ENCODE measurements at regions of chr12 and their contacts with region 1.

Region 1: DNA sequence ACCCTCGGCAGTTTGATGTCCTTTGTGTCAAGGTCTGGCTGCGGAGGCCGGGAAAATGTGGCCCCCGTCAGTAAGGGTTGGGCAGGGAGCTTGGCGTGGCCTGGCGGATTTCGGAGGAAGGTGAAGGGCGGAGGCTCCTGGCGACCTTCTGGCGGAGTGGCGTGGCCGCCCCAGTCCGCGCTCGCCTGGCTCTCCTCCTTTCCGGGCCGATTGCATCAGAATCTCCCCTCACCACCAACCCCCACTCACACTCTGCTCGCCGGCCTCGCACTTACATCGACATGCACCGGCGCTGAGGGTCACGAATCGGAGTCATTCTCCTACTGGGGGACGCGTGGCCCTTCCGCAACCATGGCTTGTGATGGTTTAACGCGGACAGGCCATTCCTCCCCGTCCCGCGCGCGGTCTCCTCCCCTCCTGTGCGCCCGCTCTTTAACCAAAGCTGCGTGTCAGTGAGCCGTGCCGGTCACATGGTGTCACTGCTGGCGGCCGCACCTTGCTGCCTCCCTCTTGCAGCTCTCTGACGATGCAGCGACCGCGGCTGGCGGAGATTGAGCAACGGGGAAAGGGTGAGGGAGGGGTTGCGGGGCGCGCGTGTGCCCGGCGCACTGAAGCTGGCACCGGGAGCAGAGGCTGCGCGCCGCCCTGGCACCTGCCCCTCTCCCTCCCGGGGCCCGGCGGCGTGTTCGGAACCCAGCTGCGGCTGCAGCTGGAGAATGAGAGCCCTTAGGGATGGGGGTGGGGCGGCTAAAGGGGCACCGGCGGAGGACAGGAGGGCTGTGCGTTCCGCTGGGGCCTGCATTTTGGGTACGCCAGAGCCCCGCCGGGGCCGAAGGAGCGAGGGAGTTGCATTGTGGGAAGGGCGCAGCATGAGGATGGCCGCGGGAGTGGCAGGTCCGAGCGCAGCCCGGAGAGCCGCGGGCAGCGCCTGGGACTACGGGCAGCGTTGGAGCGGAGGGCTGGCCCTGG is at the start of gene SLC38A1:
- DNase-seq: peak; percentile 95
- H3K4me3 ChIP-seq: peak within 1 kb of the TSS; percentile 59 to 86 (median 68)
- H3K27ac ChIP-seq: peak within 1 kb of the TSS; percentile 91 to 94 (median 93)
- H3K4me1 ChIP-seq: peaks cover 19 to 58% (median 43%) of the 10 kb centered on the region in 4 donors
- H3K27me3 ChIP-seq: no peaks in the 10 kb centered on the region
- CTCF ChIP-seq: no peak
- EP300 ChIP-seq: no peak
- POLR2A ChIP-seq: peak; percentile 87
- total RNA-seq, gene SLC38A1: 173 to 200 (median 193) TPM

Region 2: GRCh38 chr12:45990468-45991283 is 278.2 kb before region 1 on chr12 and contains the start of gene SCAF11:
- intact Hi-C with region 1: no loop called
- DNase-seq: peak; percentile 100
- H3K4me3 ChIP-seq: peak within 1 kb of the TSS; percentile 76 to 90 (median 86)
- H3K27ac ChIP-seq: peak within 1 kb of the TSS; percentile 95 to 99 (median 97)
- H3K4me1 ChIP-seq: peaks cover 32 to 43% (median 38%) of the 10 kb centered on the region in 4 donors
- H3K27me3 ChIP-seq: no peaks in the 10 kb centered on the region
- CTCF ChIP-seq: peak in 2 of 3 experiments; percentile 98
- EP300 ChIP-seq: peak; percentile 28
- POLR2A ChIP-seq: peak; percentile 95
- total RNA-seq, gene SCAF11: 117 to 150 (median 132) TPM

Region 3: GRCh38 chr12:46153268-46153872 is 115.5 kb before region 1 on chr12:
- intact Hi-C with region 1: loop called (anchors 2 kb)
- DNase-seq: no peak
- H3K4me3 ChIP-seq: no peak overlapping the region
- H3K27ac ChIP-seq: peak overlapping the region in 2 of 4 donors; percentile 18 to 42
- H3K4me1 ChIP-seq: peaks cover 6 to 47% (median 43%) of the 10 kb centered on the region in 4 donors
- H3K27me3 ChIP-seq: no peaks in the 10 kb centered on the region
- CTCF ChIP-seq: peak; percentile 52 to 72 (median 71)
- EP300 ChIP-seq: no peak
- POLR2A ChIP-seq: no peak

Region 4: GRCh38 chr12:46209914-46210872 is 58.7 kb before region 1 on chr12:
- intact Hi-C with region 1: loop called (anchors 5 kb)
- DNase-seq: no peak
- H3K4me3 ChIP-seq: no peak overlapping the region
- H3K27ac ChIP-seq: peak overlapping the region; percentile 73 to 79 (median 77)
- H3K4me1 ChIP-seq: peaks cover 47 to 87% (median 73%) of the 10 kb centered on the region in 4 donors
- H3K27me3 ChIP-seq: no peaks in the 10 kb centered on the region
- CTCF ChIP-seq: no peak
- EP300 ChIP-seq: no peak
- POLR2A ChIP-seq: no peak

Measured in esophagus muscularis mucosa (tissue), 4 donors.